HEK293 (cell line): ENCODE measurements at regions of chr4 and their contacts with region 1.

Region 1: GRCh38 chr4:48085821-48086607 is 48.0 kb downstream of the TXK start:
- H3K4me3 ChIP-seq: no peak overlapping the region
- H3K27ac ChIP-seq: no peak overlapping the region
- H3K4me1 ChIP-seq: no peaks in the 10 kb centered on the region
- CTCF ChIP-seq: no peak

Region 2: DNA sequence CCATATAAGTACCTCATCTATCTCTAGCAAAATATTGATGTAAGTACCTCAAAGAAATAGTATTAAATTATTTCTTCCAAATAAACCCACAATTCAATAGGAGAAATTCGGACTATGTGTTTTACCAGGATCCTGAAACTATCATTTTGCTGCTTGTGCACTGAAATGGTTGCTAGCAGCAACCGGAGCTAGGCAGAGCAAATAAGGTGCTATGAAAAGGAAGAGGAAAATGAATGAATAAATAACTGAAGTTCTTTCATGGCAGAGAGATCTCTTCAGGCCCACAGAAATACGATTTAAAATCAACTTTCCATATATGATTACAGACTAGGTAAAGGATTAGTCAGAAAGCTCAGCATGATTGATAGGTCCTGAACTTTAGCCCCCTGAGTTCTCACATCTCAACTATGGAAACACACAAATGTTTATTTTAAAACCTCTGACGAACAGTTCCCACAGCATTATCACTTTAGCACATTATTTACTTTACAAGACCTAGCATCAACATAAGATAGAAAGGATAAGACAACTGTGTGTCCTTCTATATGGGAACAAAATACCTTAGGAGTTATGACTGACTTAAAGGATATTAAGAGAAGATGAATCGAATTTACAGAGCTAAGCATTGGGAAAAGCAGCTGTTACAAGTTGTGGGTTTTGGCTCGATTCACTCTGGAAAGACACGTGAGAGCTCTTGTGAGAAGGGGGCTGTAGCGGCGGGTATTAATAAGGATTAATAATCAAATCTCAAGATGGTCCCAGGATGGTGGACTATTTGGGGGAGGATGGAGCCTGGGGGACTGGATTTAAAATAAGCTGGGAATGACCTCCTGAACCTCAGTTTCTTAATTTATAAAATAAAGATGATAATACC is 352.5 kb before region 1 on chr4:
- CTCF ChIA-PET with region 1: no interaction called
- POLR2A ChIA-PET with region 1: no interaction called
- H3K4me3 ChIP-seq: no peak overlapping the region
- H3K27ac ChIP-seq: no peak overlapping the region
- H3K4me1 ChIP-seq: no peaks in the 10 kb centered on the region
- CTCF ChIP-seq: no peak

Region 3: DNA sequence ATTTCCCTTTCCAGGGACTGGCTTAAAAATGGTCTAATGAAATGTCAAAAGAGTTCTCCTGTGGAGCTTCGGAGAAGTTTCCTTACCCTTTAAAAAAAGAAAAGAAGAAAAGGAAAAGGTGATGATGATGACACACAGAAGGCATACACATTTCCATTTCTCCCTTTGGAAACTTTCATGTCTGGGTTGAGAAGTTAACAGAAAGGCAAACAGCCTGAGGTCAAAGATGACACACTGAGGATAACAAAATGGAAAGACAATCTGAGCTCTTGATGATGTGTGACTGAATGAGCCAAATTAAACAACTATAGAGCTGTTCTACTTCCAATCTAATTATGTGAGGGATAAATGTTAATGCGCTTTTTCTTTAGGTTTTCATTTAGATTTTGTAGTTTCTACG is 203.8 kb before region 1 on chr4:
- CTCF ChIA-PET with region 1: no interaction called
- POLR2A ChIA-PET with region 1: no interaction called
- H3K4me3 ChIP-seq: no peak overlapping the region
- H3K27ac ChIP-seq: no peak overlapping the region
- H3K4me1 ChIP-seq: no peaks in the 10 kb centered on the region
- CTCF ChIP-seq: no peak

Region 4: GRCh38 chr4:48002267-48002666 is 83.7 kb before region 1 on chr4:
- CTCF ChIA-PET with region 1: interaction called, 36 read pairs
- POLR2A ChIA-PET with region 1: no interaction called
- H3K4me3 ChIP-seq: no peak overlapping the region
- H3K27ac ChIP-seq: no peak overlapping the region
- H3K4me1 ChIP-seq: no peaks in the 10 kb centered on the region
- CTCF ChIP-seq: no peak

Region 5: DNA sequence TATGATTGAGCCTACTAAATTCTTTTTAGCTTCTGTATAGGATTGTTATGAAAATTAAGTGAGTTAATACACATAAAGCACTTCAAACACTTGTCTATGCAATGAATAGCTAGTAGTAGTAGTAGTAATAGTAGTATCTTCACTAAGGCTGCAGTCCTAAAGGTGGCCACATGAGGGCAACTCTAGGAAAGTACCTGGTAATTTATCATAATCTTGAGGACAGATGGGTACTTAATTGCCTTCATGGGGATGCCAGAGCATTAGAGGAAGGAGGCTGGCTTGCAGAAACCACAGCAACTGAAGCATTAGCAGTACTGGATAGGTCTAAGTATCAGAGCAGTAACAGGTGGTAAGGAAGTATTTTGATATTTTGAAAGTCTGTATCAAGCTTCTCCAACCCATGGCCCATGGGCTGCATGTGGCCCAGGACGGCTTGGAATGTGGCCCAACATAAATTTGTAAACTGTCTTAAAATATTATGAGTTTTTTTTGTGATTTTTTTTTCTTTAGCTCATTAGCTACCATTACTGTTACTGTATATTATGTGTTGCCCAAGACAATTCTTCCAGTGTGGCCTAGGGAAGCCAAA is 52.1 kb before region 1 on chr4:
- CTCF ChIA-PET with region 1: interaction called, 11 read pairs
- POLR2A ChIA-PET with region 1: no interaction called
- H3K4me3 ChIP-seq: no peak overlapping the region
- H3K27ac ChIP-seq: no peak overlapping the region
- H3K4me1 ChIP-seq: no peaks in the 10 kb centered on the region
- CTCF ChIP-seq: no peak